ENCODE measurements at regions of chr11 and their contacts with region 1.

Region 1: DNA sequence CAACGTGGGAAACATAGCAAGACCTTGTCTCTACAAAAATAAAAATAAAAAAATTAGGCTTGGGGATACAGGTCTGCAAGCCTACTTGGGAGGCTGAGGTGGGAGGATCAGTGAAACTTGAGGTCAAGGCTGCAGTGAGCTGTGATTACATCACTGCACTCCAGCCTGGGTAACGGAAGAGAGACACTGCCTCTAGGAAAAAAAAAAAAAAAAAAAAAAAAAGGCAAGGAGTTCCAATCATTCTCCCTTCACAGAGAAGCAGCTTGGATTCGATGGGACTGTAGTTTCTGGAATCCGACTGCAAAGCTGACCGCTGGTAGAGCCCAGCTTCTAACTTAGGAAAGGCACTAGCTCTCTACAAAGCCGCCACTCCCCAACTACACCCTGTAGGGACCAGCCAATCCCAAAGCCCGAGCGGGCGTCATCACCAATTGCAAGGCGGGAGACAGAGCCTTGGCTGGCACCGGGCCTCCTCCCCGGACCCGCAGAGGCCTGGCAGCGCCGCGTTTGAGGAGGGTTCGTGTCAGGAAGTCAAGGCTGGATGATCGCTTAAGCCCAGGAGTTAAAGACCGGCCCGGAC is 699 bp upstream of the DDB2 start:
- DNase-seq: peak; percentile 95 to 96
- ATAC-seq: peak; percentile 95 to 96
- H3K4me3 ChIP-seq: peak overlapping the region; percentile 77
- H3K27ac ChIP-seq: peak overlapping the region; percentile 96 to 99
- H3K4me1 ChIP-seq: peaks cover 30% of the 10 kb centered on the region
- CTCF ChIP-seq: no peak
- EP300 ChIP-seq: no peak
- POLR2A ChIP-seq: peak; percentile 79
- RAD21 ChIP-seq: no peak

Region 2: GRCh38 chr11:47186076-47186936 is 27.8 kb before region 1 on chr11 and contains the start of gene PACSIN3:
- CTCF ChIA-PET with region 1: interaction called, 19 read pairs
- POLR2A ChIA-PET with region 1: interaction called, 60 read pairs
- DNase-seq: peak; percentile 58 to 72
- ATAC-seq: peak; percentile 72 to 75
- H3K4me3 ChIP-seq: peak within 1 kb of the TSS; percentile 72
- H3K27ac ChIP-seq: peak within 1 kb of the TSS; percentile 84 to 98
- H3K4me1 ChIP-seq: peaks cover 47% of the 10 kb centered on the region
- CTCF ChIP-seq: no peak
- EP300 ChIP-seq: no peak
- POLR2A ChIP-seq: peak; percentile 59
- RAD21 ChIP-seq: no peak
- polyA plus RNA-seq, gene PACSIN3: 15.8 and 16.5 TPM in 2 replicates

Region 3: DNA sequence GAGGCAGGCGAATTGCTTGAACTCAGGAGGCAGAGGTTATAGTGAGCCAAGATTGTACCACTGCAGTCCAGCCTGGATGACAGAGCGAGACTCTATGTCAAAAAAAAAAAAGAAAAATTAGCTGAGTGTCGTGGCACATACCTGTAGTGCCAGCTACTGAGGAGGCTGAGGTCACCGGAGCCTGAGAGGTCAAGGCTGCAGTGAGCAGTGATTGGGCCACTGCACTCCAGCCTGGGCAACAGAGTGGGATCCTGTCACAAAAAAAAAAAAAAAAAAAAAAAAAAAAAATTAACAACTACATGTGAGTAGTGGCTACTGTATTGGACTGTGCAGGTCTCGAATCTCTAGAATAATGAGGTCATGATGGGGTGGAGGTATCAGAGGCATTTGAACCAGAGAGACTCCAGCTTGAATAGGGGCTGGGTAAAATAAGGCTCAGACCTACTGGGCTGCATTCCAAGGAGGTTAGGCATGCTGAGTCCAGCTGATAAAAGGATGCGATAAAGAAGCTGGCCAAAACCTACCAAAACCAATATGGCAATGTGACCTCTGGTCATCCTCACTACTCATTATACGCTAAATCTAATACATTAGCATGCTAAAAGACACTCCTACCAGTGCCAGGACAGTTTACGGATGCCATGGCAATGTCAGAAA is 22.1 kb before region 1 on chr11:
- CTCF ChIA-PET with region 1: interaction called, 6 read pairs
- POLR2A ChIA-PET with region 1: interaction called, 60 read pairs
- DNase-seq: no peak
- ATAC-seq: no peak
- H3K4me3 ChIP-seq: no peak overlapping the region
- H3K27ac ChIP-seq: no peak overlapping the region
- H3K4me1 ChIP-seq: peaks cover 36% of the 10 kb centered on the region
- CTCF ChIP-seq: no peak
- EP300 ChIP-seq: no peak
- POLR2A ChIP-seq: no peak
- RAD21 ChIP-seq: no peak

Region 4: GRCh38 chr11:47225552-47226400 is 11.7 kb after region 1 on chr11:
- CTCF ChIA-PET with region 1: interaction called, 9 read pairs
- POLR2A ChIA-PET with region 1: interaction called, 11 read pairs
- DNase-seq: no peak
- ATAC-seq: no peak
- H3K4me3 ChIP-seq: no peak overlapping the region
- H3K27ac ChIP-seq: no peak overlapping the region
- H3K4me1 ChIP-seq: peaks cover 3% of the 10 kb centered on the region
- CTCF ChIP-seq: no peak
- EP300 ChIP-seq: no peak
- POLR2A ChIP-seq: no peak
- RAD21 ChIP-seq: no peak

Region 5: DNA sequence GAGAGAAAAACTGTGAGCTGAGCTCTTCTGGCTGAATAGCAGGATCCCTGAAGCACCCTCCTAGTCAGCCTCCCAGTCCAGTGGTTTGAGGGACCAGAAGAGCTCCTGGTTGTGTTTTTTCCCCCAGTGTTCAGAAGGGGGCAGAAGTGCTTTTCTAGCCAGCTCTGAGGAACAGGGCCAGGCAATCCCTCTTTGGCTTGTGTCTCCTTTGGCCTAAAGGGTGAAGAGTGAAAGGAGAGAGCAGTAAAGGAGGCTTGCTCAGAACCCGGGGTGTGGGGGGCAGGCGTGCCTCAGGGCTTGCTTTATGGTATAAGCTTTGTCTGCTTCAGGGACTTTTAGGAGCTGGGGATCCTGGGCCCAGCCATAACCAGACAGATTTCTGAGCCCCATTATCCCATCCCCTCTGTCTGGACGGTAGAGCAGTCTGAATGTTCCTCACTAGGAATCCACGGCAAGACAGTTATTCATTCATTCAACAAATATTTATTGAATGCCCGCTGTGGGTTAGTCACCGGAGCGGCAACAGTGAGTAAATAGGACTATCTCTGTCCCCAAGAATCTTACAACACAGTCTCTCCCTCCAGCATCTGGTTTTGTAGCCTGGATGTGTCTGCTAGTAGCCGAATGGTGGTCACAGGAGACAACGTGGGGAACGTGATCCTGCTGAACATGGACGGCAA is 20.1 kb after region 1 on chr11:
- CTCF ChIA-PET with region 1: interaction called, 101 read pairs
- POLR2A ChIA-PET with region 1: interaction called, 50 read pairs
- DNase-seq: peak; percentile 67 to 90
- ATAC-seq: peak; percentile 88 to 90
- H3K4me3 ChIP-seq: peak overlapping the region; percentile 21
- H3K27ac ChIP-seq: peak overlapping the region; percentile 79 to 89
- H3K4me1 ChIP-seq: peaks cover 46% of the 10 kb centered on the region
- CTCF ChIP-seq: peak; percentile 67
- EP300 ChIP-seq: peak; percentile 25 to 58; a peak in 2 of 5 replicates
- POLR2A ChIP-seq: no peak
- RAD21 ChIP-seq: peak; percentile 75 to 78

Region 6: GRCh38 chr11:47248664-47249377 is 34.7 kb after region 1 on chr11 and contains the start of gene ACP2:
- CTCF ChIA-PET with region 1: interaction called, 5 read pairs
- POLR2A ChIA-PET with region 1: interaction called, 32 read pairs
- DNase-seq: peak; percentile 81 to 94
- ATAC-seq: peak; percentile 93 to 96
- H3K4me3 ChIP-seq: peak within 1 kb of the TSS; percentile 74
- H3K27ac ChIP-seq: peak within 1 kb of the TSS; percentile 95
- H3K4me1 ChIP-seq: peaks cover 19% of the 10 kb centered on the region; the same call in 2 of the 3 replicates
- CTCF ChIP-seq: peak; percentile 35
- EP300 ChIP-seq: no peak
- POLR2A ChIP-seq: peak; percentile 83; the same call in 1 of the 2 replicates
- RAD21 ChIP-seq: peak; percentile 31 to 39; a peak in 4 of 5 replicates
- polyA plus RNA-seq, gene ACP2: 13.6 and 17.7 TPM in 2 replicates

Measured in A549 (cell line).